ENCODE measurements at regions of chr16 and their contacts with region 1.

Region 1: GRCh38 chr16:73565262-73565661 is 517.3 kb upstream of the ZFHX3 start:
- DNase-seq: peak; percentile 49
- H3K4me3 ChIP-seq: no peak overlapping the region
- H3K27ac ChIP-seq: no peak overlapping the region
- H3K4me1 ChIP-seq: no peaks in the 10 kb centered on the region
- H3K27me3 ChIP-seq: peaks cover 56% of the 10 kb centered on the region
- CTCF ChIP-seq: peak; percentile 49

Region 2: DNA sequence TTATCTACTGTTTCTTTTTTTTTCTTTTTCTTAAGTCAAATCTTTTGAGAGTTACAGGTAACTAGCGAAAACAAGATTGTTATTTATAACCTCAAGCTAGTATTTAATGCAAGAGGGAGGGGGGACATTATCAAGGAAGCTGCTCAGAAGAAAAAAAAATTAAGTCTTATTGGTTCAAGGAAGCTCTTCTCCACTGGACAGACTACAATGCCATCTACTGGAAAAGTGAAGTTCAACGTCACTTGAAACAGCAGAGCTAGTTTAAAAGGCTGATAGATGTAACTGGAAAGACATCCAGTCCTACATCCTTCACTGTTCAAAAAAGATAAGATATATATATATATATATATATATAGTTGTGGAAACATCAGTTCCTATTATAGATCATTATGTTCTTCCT is 313.3 kb after region 1 on chr16:
- CTCF ChIA-PET with region 1: no interaction called
- POLR2A ChIA-PET with region 1: no interaction called
- intact Hi-C with region 1: loop called (anchors 1 kb)
- DNase-seq: peak; percentile 65
- H3K4me3 ChIP-seq: no peak overlapping the region
- H3K27ac ChIP-seq: no peak overlapping the region
- H3K4me1 ChIP-seq: no peaks in the 10 kb centered on the region
- H3K27me3 ChIP-seq: peaks cover 91% of the 10 kb centered on the region
- CTCF ChIP-seq: peak; percentile 59

Region 3: GRCh38 chr16:73956587-73957494 is 391.6 kb after region 1 on chr16:
- CTCF ChIA-PET with region 1: interaction called, 3 read pairs
- POLR2A ChIA-PET with region 1: no interaction called
- intact Hi-C with region 1: loop called (anchors 5 kb)
- DNase-seq: peak; percentile 68
- H3K4me3 ChIP-seq: no peak overlapping the region
- H3K27ac ChIP-seq: no peak overlapping the region
- H3K4me1 ChIP-seq: no peaks in the 10 kb centered on the region
- H3K27me3 ChIP-seq: peaks cover 43% of the 10 kb centered on the region
- CTCF ChIP-seq: peak; percentile 86

Region 4: DNA sequence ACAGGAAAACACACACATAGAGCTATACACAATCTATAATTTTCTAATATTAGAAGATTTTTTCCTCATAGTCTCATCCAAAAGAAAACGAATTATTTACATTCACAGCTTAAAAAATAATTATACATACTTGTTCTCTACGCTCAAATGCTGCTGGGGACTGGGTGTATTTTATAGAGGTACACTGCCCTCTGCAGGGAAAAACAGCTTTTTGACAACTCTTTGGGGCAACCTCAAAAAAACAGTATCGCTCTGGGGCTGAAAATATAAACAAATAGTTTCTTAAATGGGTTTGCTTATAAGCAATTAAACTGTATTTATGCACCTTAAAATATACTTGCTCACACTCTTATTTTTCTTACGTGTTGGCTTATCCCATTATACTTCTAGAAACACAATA is 469.6 kb after region 1 on chr16:
- CTCF ChIA-PET with region 1: no interaction called
- POLR2A ChIA-PET with region 1: no interaction called
- intact Hi-C with region 1: loop called (anchors 5 kb)
- DNase-seq: peak; percentile 49
- H3K4me3 ChIP-seq: no peak overlapping the region
- H3K27ac ChIP-seq: no peak overlapping the region
- H3K4me1 ChIP-seq: no peaks in the 10 kb centered on the region
- H3K27me3 ChIP-seq: no peaks in the 10 kb centered on the region
- CTCF ChIP-seq: peak; percentile 58

Region 5: GRCh38 chr16:74226338-74226954 is 661.2 kb after region 1 on chr16:
- CTCF ChIA-PET with region 1: interaction called, 3 read pairs
- POLR2A ChIA-PET with region 1: no interaction called
- intact Hi-C with region 1: loop called (anchors 10 kb)
- DNase-seq: peak; percentile 62
- H3K4me3 ChIP-seq: no peak overlapping the region
- H3K27ac ChIP-seq: no peak overlapping the region
- H3K4me1 ChIP-seq: peaks cover 9% of the 10 kb centered on the region
- H3K27me3 ChIP-seq: no peaks in the 10 kb centered on the region
- CTCF ChIP-seq: peak; percentile 79

Region 6: DNA sequence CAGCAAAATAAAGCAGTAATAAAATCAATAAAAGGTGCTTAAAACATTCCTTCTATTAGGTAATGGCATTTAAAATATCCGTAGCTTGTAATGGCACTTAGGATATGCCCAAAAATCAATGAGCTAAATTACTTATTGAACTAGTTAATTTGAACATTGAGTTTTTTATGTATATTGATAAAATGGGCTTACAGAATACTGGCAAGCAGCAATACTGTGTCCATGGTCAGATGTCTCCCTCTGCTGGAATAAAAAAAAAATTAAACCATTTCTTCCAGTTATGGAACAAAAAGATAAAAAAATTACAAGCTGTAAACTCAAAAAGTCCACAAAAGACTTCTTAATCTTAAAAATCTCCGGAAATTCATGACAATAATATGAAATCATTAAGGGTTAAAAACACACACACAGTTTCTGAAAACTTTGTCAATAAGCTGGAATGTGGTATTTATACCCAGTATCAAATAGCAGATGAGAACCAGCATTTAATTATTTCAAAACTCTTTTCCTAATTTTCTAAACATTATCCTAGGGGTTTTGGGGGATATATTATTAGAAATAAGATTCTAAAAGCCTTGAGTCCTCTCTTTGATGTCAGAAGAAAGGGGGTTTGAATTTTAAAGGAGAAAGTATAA is 709.9 kb after region 1 on chr16:
- CTCF ChIA-PET with region 1: no interaction called
- POLR2A ChIA-PET with region 1: no interaction called
- intact Hi-C with region 1: loop called (anchors 5 kb)
- DNase-seq: peak; percentile 62
- H3K4me3 ChIP-seq: no peak overlapping the region
- H3K27ac ChIP-seq: no peak overlapping the region
- H3K4me1 ChIP-seq: no peaks in the 10 kb centered on the region
- H3K27me3 ChIP-seq: no peaks in the 10 kb centered on the region
- CTCF ChIP-seq: peak; percentile 73

Measured in A673 (cell line).